PC-3 (cell line): ENCODE measurements at regions of chr4 and their contacts with region 1.

Region 1: GRCh38 chr4:80026100-80026499 is 46.9 kb downstream of the ANTXR2 start:
- DNase-seq: peak; percentile 14
- ATAC-seq: no peak
- H3K4me3 ChIP-seq: no peak overlapping the region
- H3K27ac ChIP-seq: no peak overlapping the region
- H3K4me1 ChIP-seq: peaks cover 18% of the 10 kb centered on the region
- H3K27me3 ChIP-seq: no peaks in the 10 kb centered on the region
- CTCF ChIP-seq: no peak

Region 2: DNA sequence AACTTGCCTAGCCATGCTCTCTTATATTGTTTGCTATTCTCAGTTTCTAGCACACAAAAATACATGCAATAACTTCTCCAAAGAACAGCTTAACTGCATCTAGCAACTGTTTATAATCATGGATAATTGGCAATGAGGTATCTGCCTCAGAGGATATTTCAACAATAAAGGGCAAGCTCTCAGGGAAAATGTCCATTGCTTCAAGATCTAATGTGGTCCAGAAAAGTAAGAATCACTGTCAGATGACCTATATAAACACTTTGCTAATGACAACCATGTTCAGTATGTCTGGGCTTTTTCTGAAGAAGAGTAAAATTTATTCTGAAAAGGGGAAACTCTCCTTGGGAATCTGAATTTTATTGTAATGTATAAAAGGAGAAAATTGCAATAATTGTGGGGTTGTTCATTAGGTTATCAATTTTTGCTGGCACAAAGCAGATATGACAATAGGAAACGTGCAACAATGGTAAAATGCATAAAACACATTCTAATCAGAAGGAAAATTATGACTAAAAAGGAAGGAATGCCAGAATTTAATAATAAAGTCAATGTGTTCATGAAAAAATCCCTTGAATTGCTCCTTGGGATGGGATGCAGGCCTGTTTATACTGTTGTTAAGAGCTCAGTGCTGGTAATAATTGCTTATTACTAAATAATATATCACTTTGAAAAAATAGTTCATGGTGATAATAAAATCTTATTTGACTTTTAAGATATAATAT is 43.3 kb before region 1 on chr4:
- CTCF ChIA-PET with region 1: no interaction called
- POLR2A ChIA-PET with region 1: no interaction called
- intact Hi-C with region 1: no loop called
- DNase-seq: no peak
- ATAC-seq: no peak
- H3K4me3 ChIP-seq: no peak overlapping the region
- H3K27ac ChIP-seq: no peak overlapping the region
- H3K4me1 ChIP-seq: peaks cover 6% of the 10 kb centered on the region
- H3K27me3 ChIP-seq: no peaks in the 10 kb centered on the region
- CTCF ChIP-seq: no peak

Region 3: GRCh38 chr4:80254114-80254513 is 228.0 kb after region 1 on chr4:
- CTCF ChIA-PET with region 1: no interaction called
- POLR2A ChIA-PET with region 1: no interaction called
- intact Hi-C with region 1: no loop called
- DNase-seq: no peak
- ATAC-seq: no peak
- H3K4me3 ChIP-seq: no peak overlapping the region
- H3K27ac ChIP-seq: no peak overlapping the region
- H3K4me1 ChIP-seq: peaks cover 16% of the 10 kb centered on the region
- H3K27me3 ChIP-seq: no peaks in the 10 kb centered on the region
- CTCF ChIP-seq: no peak

Region 4: GRCh38 chr4:80307774-80308465 is 281.8 kb after region 1 on chr4:
- CTCF ChIA-PET with region 1: no interaction called
- POLR2A ChIA-PET with region 1: no interaction called
- intact Hi-C with region 1: loop called (anchors 10 kb)
- DNase-seq: peak; percentile 59
- ATAC-seq: peak; percentile 59
- H3K4me3 ChIP-seq: peak overlapping the region; percentile 44; the same call in 1 of the 2 replicates
- H3K27ac ChIP-seq: peak overlapping the region; percentile 76
- H3K4me1 ChIP-seq: peaks cover 55% of the 10 kb centered on the region
- H3K27me3 ChIP-seq: no peaks in the 10 kb centered on the region
- CTCF ChIP-seq: no peak